Naive thymus-derived CD4-positive, alpha-beta T cell (primary cell): ENCODE measurements at regions of chr17 and their contacts with region 1.

Region 1: GRCh38 chr17:82551779-82552457 is 32.4 kb downstream of the FOXK2 start:
- DNase-seq: peak; percentile 61 to 83 (median 77)
- ATAC-seq: peak; percentile 99
- H3K4me3 ChIP-seq: no peak overlapping the region
- H3K4me3 Mint-ChIP-seq: peak overlapping the region in 3 of 10 donors; percentile 13 to 64 (median 27)
- H3K27ac ChIP-seq: no peak overlapping the region
- H3K27ac Mint-ChIP-seq: peak overlapping the region in 8 of 9 donors; percentile 32 to 86 (median 81)
- H3K4me1 ChIP-seq: peaks cover 3 to 18% of the 10 kb centered on the region in 2 donors
- H3K4me1 Mint-ChIP-seq: peaks cover 28 to 52% (median 37%) of the 10 kb centered on the region in 7 donors
- H3K27me3 ChIP-seq: no peaks in the 10 kb centered on the region
- H3K27me3 Mint-ChIP-seq: no peaks in the 10 kb centered on the region

Region 2: GRCh38 chr17:81879121-81879520 is 672.8 kb before region 1 on chr17:
- CTCF ChIA-PET with region 1: no interaction called
- POLR2A ChIA-PET with region 1: no interaction called
- intact Hi-C with region 1: no loop called
- DNase-seq: no peak
- ATAC-seq: no peak
- H3K4me3 ChIP-seq: no peak overlapping the region
- H3K4me3 Mint-ChIP-seq: no peak overlapping the region
- H3K27ac ChIP-seq: no peak overlapping the region
- H3K27ac Mint-ChIP-seq: peak overlapping the region in 1 of 9 donors; percentile 11
- H3K4me1 ChIP-seq: no peaks in the 10 kb centered on the region
- H3K4me1 Mint-ChIP-seq: peaks cover 0 to 11% (median 8%) of the 10 kb centered on the region in 7 donors
- H3K27me3 ChIP-seq: no peaks in the 10 kb centered on the region
- H3K27me3 Mint-ChIP-seq: no peaks in the 10 kb centered on the region

Region 3: GRCh38 chr17:82257473-82257872 is 294.4 kb before region 1 on chr17:
- CTCF ChIA-PET with region 1: no interaction called
- POLR2A ChIA-PET with region 1: no interaction called
- intact Hi-C with region 1: no loop called
- DNase-seq: peak in 3 of 9 donors; percentile 40 to 56 (median 45)
- ATAC-seq: peak; percentile 91
- H3K4me3 ChIP-seq: no peak overlapping the region
- H3K4me3 Mint-ChIP-seq: peak overlapping the region in 3 of 10 donors; percentile 11 to 49 (median 36)
- H3K27ac ChIP-seq: peak overlapping the region; percentile 34
- H3K27ac Mint-ChIP-seq: peak overlapping the region; percentile 44 to 90 (median 79)
- H3K4me1 ChIP-seq: no peaks in the 10 kb centered on the region
- H3K4me1 Mint-ChIP-seq: peaks cover 14 to 51% (median 33%) of the 10 kb centered on the region in 7 donors
- H3K27me3 ChIP-seq: no peaks in the 10 kb centered on the region
- H3K27me3 Mint-ChIP-seq: no peaks in the 10 kb centered on the region

Region 4: DNA sequence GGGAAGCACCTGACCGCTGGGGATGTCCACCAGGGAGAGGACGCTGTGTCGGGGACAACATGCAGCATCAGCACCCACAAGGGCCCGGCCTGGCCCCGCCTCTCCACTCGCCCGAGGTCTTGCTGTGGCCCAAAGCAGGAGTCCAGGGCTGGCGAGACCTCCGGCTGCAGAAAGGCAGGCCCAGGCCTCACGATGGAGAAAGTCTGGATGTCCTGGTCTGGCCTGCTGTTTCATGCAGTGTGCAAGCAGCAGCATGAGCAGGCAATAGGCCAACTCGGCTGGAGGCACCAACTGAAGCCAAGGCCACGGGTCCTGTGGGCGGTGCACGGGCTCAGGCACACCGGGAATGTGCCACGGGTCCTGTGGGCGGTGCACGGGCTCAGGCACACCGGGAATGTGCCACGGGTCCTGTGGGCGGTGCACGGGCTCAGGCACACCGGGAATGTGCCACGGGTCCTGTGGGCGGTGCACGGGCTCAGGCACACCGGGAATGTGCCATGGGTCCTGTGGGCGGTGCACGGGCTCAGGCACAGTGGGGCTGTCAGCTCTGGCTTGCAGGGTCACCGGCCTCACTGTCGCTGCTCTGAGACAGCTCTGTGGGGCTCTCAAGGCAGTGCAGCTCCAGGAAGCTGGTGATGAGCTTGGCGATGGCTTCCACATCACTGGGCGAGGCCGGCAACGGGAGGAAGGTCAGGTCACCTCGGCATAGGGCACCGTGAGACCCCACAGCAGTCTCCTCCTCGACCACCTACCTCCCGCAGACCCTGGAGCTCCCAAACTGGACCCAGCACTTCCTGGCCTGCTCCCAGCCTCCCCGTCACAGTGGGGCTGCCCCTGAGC is 108.2 kb before region 1 on chr17:
- CTCF ChIA-PET with region 1: no interaction called
- POLR2A ChIA-PET with region 1: no interaction called
- intact Hi-C with region 1: no loop called
- DNase-seq: no peak
- ATAC-seq: no peak
- H3K4me3 ChIP-seq: no peak overlapping the region
- H3K4me3 Mint-ChIP-seq: no peak overlapping the region
- H3K27ac ChIP-seq: no peak overlapping the region
- H3K27ac Mint-ChIP-seq: peak overlapping the region in 2 of 9 donors; percentile 12 to 23
- H3K4me1 ChIP-seq: peaks cover 6 to 7% of the 10 kb centered on the region in 2 donors
- H3K4me1 Mint-ChIP-seq: peaks cover 0 to 25% (median 13%) of the 10 kb centered on the region in 7 donors
- H3K27me3 ChIP-seq: no peaks in the 10 kb centered on the region
- H3K27me3 Mint-ChIP-seq: no peaks in the 10 kb centered on the region

Region 5: GRCh38 chr17:82480318-82480717 is 71.6 kb before region 1 on chr17:
- CTCF ChIA-PET with region 1: no interaction called
- POLR2A ChIA-PET with region 1: no interaction called
- intact Hi-C with region 1: loop called in 1 of 2 experiments (anchors 2 kb)
- DNase-seq: no peak
- ATAC-seq: no peak
- H3K4me3 ChIP-seq: no peak overlapping the region
- H3K4me3 Mint-ChIP-seq: no peak overlapping the region
- H3K27ac ChIP-seq: no peak overlapping the region
- H3K27ac Mint-ChIP-seq: no peak overlapping the region
- H3K4me1 ChIP-seq: no peaks in the 10 kb centered on the region
- H3K4me1 Mint-ChIP-seq: peaks cover 0 to 34% (median 2%) of the 10 kb centered on the region in 7 donors
- H3K27me3 ChIP-seq: no peaks in the 10 kb centered on the region
- H3K27me3 Mint-ChIP-seq: no peaks in the 10 kb centered on the region

Region 6: GRCh38 chr17:82494236-82495055 is 57.5 kb before region 1 on chr17:
- CTCF ChIA-PET with region 1: no interaction called
- POLR2A ChIA-PET with region 1: no interaction called
- intact Hi-C with region 1: loop called (anchors 1 to 2 kb)
- DNase-seq: peak; percentile 68 to 92 (median 80)
- ATAC-seq: peak; percentile 80
- H3K4me3 ChIP-seq: no peak overlapping the region
- H3K4me3 Mint-ChIP-seq: peak overlapping the region in 9 of 10 donors; percentile 14 to 84 (median 65)
- H3K27ac ChIP-seq: peak overlapping the region; percentile 28
- H3K27ac Mint-ChIP-seq: peak overlapping the region; percentile 77 to 94 (median 87)
- H3K4me1 ChIP-seq: peaks cover 0 to 9% of the 10 kb centered on the region in 2 donors
- H3K4me1 Mint-ChIP-seq: peaks cover 8 to 33% (median 25%) of the 10 kb centered on the region in 7 donors
- H3K27me3 ChIP-seq: no peaks in the 10 kb centered on the region
- H3K27me3 Mint-ChIP-seq: peaks cover 0 to 2% (median 0%) of the 10 kb centered on the region in 5 donors

Region 7: DNA sequence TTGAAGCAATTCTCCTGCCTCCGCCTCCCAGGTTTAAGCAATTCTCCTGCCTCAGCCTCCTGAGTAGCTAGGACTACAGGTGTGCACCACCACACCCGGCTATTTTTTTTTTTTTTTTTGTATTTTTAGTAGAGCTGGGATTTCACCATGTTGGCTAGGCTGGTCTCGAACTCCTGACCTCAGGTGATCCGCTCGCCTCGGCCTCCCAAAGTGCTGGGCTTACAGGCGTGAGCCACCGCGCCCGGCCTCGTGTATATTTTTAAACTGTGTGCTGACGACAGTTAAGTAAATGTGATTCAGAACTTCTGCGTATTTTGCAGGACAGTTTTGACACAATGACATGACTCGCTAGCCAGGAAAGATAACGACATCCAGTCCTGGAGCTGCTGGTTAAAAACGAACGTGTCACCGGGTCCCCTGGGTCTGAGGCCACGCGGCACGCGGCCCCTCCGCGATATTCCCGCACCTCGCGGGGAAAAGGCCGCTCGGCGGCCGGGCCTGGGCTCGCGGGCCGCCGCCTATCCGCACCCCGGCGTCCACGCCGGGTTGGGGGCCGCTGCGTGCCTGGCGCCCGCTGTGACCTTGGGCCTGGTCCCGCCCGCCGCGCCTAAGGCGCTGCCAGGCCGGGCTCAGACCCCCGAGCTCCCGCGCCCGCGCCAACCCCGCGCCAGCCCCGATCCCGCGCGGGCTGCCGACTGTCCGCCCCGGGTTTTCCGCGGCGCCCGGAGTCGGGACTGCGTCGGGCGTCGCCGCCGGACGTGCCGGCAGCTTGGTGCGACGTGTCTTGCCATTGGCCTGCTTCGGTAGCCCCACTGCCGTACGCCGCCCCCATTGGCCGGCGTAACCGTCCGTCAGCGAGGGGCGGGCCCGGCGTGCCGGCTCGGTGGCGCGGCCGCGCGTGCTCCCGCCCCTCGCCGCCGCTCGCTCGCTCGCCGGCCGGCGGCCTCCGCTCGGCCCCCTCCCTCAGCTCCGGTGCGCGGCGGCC is 32.8 kb before region 1 on chr17 and contains the start of gene FOXK2:
- CTCF ChIA-PET with region 1: no interaction called
- POLR2A ChIA-PET with region 1: interaction called, 5 read pairs
- intact Hi-C with region 1: loop called (anchors 1 to 5 kb)
- DNase-seq: peak; percentile 90 to 99 (median 95)
- ATAC-seq: peak; percentile 99
- H3K4me3 ChIP-seq: peak within 1 kb of the TSS; percentile 67
- H3K4me3 Mint-ChIP-seq: peak within 1 kb of the TSS; percentile 82 to 99 (median 93)
- H3K27ac ChIP-seq: peak within 1 kb of the TSS; percentile 92
- H3K27ac Mint-ChIP-seq: peak within 1 kb of the TSS; percentile 71 to 93 (median 87)
- H3K4me1 ChIP-seq: peaks cover 4 to 16% of the 10 kb centered on the region in 2 donors
- H3K4me1 Mint-ChIP-seq: peaks cover 15 to 36% (median 30%) of the 10 kb centered on the region in 7 donors
- H3K27me3 ChIP-seq: no peaks in the 10 kb centered on the region
- H3K27me3 Mint-ChIP-seq: no peaks in the 10 kb centered on the region
- total RNA-seq, gene FOXK2: 36.5 to 67.1 (median 48.4) TPM